BJ (cell line): ENCODE measurements at regions of chr11 and their contacts with region 1.

Region 1: DNA sequence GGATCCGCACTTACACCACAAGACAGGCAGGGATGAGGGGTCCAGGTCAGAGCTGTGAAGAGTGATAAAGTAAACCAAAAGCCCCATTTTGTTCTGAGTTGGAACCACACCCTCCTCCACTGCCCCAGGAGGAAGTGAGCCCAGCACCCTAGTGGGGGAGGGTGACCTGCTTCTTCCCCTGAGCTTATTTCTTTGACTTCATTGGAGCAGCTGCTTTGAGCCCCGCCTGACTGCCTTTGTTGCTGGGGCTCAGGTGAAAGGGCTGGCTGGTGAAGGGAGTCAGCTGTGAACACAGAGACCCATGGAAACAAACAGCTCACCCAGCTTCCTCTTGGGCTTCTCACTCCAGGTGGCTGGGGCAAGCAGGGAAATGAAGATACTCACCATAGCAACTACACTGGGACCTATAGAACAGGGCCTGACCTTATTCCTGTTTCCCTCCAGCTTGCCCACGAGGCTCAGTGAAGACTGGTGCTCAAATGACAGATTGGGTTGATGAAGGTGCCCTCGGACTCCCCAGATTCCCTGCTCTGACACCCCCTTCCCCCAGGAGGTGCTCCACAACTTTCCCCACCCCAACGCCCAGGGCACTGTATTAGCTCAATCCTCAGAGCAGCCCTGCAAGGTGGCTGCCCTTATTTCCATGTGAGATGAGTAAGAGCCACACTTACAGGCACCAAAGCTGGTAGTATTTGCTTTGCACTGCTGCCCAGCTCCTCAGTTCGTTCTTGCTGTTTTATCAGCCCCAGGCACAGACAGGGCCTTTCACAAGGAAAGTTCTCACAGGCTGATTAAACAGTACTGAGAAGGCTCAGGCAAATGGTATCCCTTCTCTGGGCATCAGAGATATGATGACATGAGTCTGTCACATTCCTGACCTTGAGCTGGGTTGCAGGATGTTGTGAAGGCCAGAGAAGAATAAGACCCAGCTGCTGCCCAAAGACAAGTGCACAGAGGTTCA is 2.4 kb downstream of the UCP2 start:
- DNase-seq: no peak
- H3K4me3 ChIP-seq: no peak overlapping the region
- H3K27me3 ChIP-seq: no peaks in the 10 kb centered on the region
- CTCF ChIP-seq: no peak

Region 2: GRCh38 chr11:73965076-73965860 is 15.0 kb before region 1 on chr11:
- CTCF ChIA-PET with region 1: interaction called, 22 read pairs
- POLR2A ChIA-PET with region 1: no interaction called
- DNase-seq: no peak
- H3K4me3 ChIP-seq: no peak overlapping the region
- H3K27me3 ChIP-seq: no peaks in the 10 kb centered on the region
- CTCF ChIP-seq: no peak

Region 3: GRCh38 chr11:74371279-74372049 is 391.2 kb after region 1 on chr11:
- CTCF ChIA-PET with region 1: no interaction called
- POLR2A ChIA-PET with region 1: no interaction called
- DNase-seq: peak; percentile 64
- H3K4me3 ChIP-seq: no peak overlapping the region
- H3K27me3 ChIP-seq: no peaks in the 10 kb centered on the region
- CTCF ChIP-seq: no peak